B cell (primary cell): ENCODE measurements at regions of chr9 and their contacts with region 1.

Region 1: DNA sequence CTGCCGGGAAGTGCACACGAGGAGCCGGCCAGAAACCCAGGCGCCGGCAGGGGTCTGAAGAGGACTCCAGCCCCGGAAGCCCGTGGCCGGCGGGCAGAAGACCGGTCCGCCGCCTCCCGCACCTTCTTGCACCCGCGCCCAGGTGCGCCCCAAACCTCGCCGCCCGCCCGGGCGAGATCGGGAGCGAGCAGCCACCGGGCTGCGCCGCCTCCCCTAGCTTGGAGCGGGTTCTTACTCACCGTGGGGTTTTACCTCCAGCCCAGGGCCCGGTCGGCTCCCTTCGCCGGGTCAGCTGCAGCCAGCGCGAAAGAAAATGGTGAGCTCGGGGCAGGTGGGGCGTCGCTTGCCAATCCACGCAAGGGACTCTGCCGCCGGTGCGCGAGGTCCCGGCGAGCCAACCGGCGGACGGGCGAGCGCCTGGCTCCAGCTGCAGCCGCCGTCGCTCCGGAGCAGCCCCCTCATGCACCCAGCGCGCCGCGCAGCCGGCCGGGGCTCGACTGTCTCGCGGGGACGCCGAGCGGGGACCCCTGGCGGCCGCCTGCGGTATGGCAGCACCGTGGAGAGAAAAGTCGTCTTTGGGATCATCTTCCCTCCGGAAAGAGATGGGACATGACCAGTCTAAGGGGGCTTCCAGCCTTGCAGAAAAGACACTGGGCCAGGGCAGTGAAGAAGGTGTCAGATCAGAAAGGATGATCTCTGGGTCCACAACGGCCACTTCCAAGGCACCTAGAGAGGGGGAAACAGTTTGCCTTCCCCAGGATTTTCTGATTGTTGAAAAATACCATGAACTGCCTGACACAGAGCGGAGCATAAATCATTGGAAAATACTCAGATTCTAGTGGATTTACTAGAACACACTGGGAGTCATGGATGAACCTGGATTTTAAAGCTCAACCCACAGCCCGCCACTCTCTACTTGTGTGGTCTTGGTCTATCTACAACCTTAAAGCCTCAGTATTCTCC is at the start of gene MOB3B:
- DNase-seq: peak; percentile 89
- ATAC-seq: peak; percentile 83
- H3K4me3 ChIP-seq: peak within 1 kb of the TSS; percentile 71 to 93 (median 82)
- H3K4me3 Mint-ChIP-seq: peak within 1 kb of the TSS; percentile 100
- H3K27ac ChIP-seq: peak within 1 kb of the TSS; percentile 88 to 97
- H3K27ac Mint-ChIP-seq: peak within 1 kb of the TSS; percentile 99
- H3K4me1 ChIP-seq: peaks cover 28 to 30% of the 10 kb centered on the region in 2 donors
- H3K4me1 Mint-ChIP-seq: peaks cover 49% of the 10 kb centered on the region
- H3K27me3 ChIP-seq: no peaks in the 10 kb centered on the region
- H3K27me3 Mint-ChIP-seq: no peaks in the 10 kb centered on the region
- CTCF ChIP-seq: peak; percentile 97
- total RNA-seq, gene MOB3B: 7.3 and 7.6 TPM in 2 replicates

Region 2: DNA sequence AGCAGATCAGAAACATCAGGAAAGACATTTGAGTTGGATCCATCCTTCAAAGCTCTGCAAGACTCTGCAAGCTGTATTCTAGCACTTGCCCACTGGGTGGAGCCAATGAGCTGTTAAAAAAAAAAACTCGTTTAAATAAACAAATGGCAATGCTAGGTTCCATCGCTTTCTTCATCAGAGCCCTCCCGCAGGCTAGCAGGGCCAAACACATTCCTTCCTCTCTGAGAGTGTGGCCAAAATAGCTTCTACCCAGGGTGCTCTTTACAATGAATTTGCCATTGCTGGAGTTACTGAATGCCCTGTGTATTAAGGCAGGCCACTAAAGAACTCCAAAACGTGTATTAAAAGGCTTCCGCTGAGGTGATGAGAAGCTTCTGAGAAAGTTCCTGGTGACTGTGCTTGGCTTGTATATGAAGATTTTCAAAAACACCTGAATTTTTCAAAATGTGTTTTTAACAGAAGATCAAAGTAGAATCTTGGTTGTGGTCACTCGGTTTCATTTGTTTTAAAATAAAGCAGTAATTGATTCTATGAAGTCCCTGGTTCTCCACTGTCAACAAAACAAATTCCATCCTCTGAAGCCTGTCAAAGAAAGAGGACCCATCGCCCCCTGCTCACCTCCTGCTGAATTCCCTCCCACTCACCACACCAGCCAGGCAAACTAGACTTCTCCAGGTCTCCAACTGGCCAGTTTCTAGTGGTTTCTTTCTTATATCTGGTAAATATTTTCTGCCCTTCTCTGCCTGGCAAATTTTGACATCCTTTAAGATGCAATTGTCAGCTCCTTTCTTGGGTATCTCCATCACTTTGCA is 196.2 kb before region 1 on chr9:
- CTCF ChIA-PET with region 1: interaction called, 395 read pairs
- POLR2A ChIA-PET with region 1: interaction called, 12 read pairs
- intact Hi-C with region 1: loop called (anchors 1 kb)
- DNase-seq: peak; percentile 84
- ATAC-seq: peak; percentile 96
- H3K4me3 ChIP-seq: no peak overlapping the region
- H3K4me3 Mint-ChIP-seq: no peak overlapping the region
- H3K27ac ChIP-seq: no peak overlapping the region
- H3K27ac Mint-ChIP-seq: no peak overlapping the region
- H3K4me1 ChIP-seq: peaks cover 6 to 12% of the 10 kb centered on the region in 2 donors
- H3K4me1 Mint-ChIP-seq: peaks cover 10% of the 10 kb centered on the region
- H3K27me3 ChIP-seq: no peaks in the 10 kb centered on the region
- H3K27me3 Mint-ChIP-seq: no peaks in the 10 kb centered on the region
- CTCF ChIP-seq: peak; percentile 91

Region 3: DNA sequence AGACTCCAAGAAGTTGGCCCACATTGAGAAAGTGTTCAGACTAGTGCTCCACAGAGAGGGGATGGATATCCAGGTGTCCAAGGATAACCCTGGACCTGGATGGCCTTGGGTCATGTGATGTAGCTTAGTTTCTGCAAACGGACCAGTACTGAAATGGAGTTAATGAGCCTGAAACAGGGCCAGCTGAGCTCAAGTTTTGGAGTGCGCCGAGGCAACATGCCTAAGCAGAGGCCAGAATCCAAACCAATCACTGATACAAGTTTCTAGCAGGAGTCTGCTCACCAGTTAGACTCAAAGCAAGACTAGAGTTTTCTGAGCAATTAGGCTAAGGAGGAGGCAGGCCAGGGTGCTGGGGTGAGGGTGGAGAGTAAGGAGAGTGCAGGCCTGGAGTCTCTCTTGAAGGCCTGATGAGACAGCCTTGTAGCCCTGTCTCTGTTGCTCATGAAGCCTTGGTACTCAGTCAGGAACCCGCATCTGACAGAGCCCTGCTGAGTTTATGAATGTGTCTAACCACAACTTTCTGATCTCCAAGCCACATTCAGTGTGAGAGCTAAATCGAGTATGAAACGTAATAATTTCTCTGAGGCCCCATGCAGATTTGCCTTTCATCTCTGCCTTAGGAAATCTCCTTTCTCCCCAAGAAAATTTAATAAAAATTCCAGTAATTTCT is 163.8 kb before region 1 on chr9:
- CTCF ChIA-PET with region 1: interaction called, 22 read pairs
- POLR2A ChIA-PET with region 1: interaction called, 4 read pairs
- intact Hi-C with region 1: no loop called
- DNase-seq: no peak
- ATAC-seq: peak; percentile 28
- H3K4me3 ChIP-seq: peak overlapping the region in 1 of 5 experiments; percentile 1
- H3K4me3 Mint-ChIP-seq: peak overlapping the region; percentile 81
- H3K27ac ChIP-seq: no peak overlapping the region
- H3K27ac Mint-ChIP-seq: peak overlapping the region; percentile 28
- H3K4me1 ChIP-seq: peaks cover 56 to 60% of the 10 kb centered on the region in 2 donors
- H3K4me1 Mint-ChIP-seq: peaks cover 56% of the 10 kb centered on the region
- H3K27me3 ChIP-seq: no peaks in the 10 kb centered on the region
- H3K27me3 Mint-ChIP-seq: no peaks in the 10 kb centered on the region
- CTCF ChIP-seq: no peak

Region 4: GRCh38 chr9:27377147-27377807 is 152.3 kb before region 1 on chr9:
- CTCF ChIA-PET with region 1: interaction called, 21 read pairs
- POLR2A ChIA-PET with region 1: no interaction called
- intact Hi-C with region 1: loop called (anchors 2 kb)
- DNase-seq: no peak
- ATAC-seq: no peak
- H3K4me3 ChIP-seq: peak overlapping the region in 4 of 5 experiments; percentile 8 to 51 (median 28)
- H3K4me3 Mint-ChIP-seq: peak overlapping the region; percentile 74
- H3K27ac ChIP-seq: peak overlapping the region; percentile 81 to 85
- H3K27ac Mint-ChIP-seq: peak overlapping the region; percentile 85
- H3K4me1 ChIP-seq: peaks cover 64 to 72% of the 10 kb centered on the region in 2 donors
- H3K4me1 Mint-ChIP-seq: peaks cover 68% of the 10 kb centered on the region
- H3K27me3 ChIP-seq: no peaks in the 10 kb centered on the region
- H3K27me3 Mint-ChIP-seq: no peaks in the 10 kb centered on the region
- CTCF ChIP-seq: no peak

Region 5: DNA sequence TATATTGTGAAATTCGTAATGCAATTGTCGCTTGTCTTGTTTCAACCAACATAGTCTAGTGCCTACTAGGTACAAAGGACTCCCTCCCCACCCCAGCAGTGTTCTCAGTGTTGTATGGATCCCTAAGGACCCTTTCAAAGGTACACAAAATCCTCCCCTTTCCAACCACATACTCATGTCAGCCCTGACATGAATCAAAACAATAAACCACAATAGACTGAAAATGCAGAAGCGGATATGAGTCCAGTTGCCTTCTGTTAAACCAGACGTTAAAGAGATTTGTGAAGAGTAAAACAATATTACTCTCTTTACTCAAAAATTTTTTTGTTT is 87.9 kb before region 1 on chr9:
- CTCF ChIA-PET with region 1: interaction called, 11 read pairs
- POLR2A ChIA-PET with region 1: no interaction called
- intact Hi-C with region 1: loop called (anchors 1 kb)
- DNase-seq: peak; percentile 51
- ATAC-seq: peak; percentile 95
- H3K4me3 ChIP-seq: peak overlapping the region in 1 of 5 experiments; percentile 21
- H3K4me3 Mint-ChIP-seq: peak overlapping the region; percentile 70
- H3K27ac ChIP-seq: peak overlapping the region; percentile 15 to 42
- H3K27ac Mint-ChIP-seq: peak overlapping the region; percentile 87
- H3K4me1 ChIP-seq: peaks cover 50 to 53% of the 10 kb centered on the region in 2 donors
- H3K4me1 Mint-ChIP-seq: peaks cover 70% of the 10 kb centered on the region
- H3K27me3 ChIP-seq: no peaks in the 10 kb centered on the region
- H3K27me3 Mint-ChIP-seq: no peaks in the 10 kb centered on the region
- CTCF ChIP-seq: no peak

Region 6: DNA sequence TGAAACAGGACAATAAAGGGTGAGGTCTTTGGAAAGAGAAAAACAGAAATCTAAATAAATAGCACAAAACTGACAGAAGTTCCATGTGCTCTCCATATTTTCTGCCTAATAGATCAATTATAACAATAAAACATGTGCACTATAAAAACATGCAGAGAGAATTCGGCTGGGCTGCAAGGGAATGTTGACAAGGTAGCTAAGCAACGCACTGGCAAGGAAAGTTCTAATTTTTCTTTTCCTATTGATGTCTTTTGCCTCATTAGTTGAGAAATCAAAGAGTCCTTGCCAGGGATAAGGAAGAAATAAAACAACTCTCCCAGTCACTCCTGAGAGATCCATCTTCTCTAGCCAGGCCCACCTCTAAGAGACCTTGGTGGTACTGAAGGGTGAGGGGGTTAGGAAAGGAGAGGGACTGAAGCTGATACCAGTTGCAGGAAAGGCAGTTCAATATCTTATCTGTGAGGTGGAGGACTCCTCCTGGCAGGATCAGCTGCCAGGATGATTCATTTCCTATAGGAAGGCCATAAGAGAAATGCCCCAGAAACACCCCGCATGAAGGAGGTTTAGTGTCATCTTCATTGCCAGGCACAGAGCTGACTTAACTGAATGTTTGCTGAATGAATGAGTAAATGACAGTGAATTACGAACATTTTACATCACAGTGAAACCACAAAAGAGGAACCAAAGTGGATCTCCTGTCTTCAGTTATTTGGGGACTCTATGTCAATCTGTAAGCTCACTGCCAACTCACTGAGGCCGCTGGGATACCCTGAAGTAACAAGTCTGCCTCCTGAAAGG is 69.2 kb before region 1 on chr9:
- CTCF ChIA-PET with region 1: interaction called, 18 read pairs
- POLR2A ChIA-PET with region 1: no interaction called
- intact Hi-C with region 1: loop called (anchors 1 kb)
- DNase-seq: peak; percentile 84
- ATAC-seq: peak; percentile 93
- H3K4me3 ChIP-seq: no peak overlapping the region
- H3K4me3 Mint-ChIP-seq: peak overlapping the region; percentile 65
- H3K27ac ChIP-seq: peak overlapping the region in 1 of 2 donors; percentile 15
- H3K27ac Mint-ChIP-seq: peak overlapping the region; percentile 80
- H3K4me1 ChIP-seq: peaks cover 31 to 41% of the 10 kb centered on the region in 2 donors
- H3K4me1 Mint-ChIP-seq: peaks cover 55% of the 10 kb centered on the region
- H3K27me3 ChIP-seq: no peaks in the 10 kb centered on the region
- H3K27me3 Mint-ChIP-seq: no peaks in the 10 kb centered on the region
- CTCF ChIP-seq: no peak

Region 7: DNA sequence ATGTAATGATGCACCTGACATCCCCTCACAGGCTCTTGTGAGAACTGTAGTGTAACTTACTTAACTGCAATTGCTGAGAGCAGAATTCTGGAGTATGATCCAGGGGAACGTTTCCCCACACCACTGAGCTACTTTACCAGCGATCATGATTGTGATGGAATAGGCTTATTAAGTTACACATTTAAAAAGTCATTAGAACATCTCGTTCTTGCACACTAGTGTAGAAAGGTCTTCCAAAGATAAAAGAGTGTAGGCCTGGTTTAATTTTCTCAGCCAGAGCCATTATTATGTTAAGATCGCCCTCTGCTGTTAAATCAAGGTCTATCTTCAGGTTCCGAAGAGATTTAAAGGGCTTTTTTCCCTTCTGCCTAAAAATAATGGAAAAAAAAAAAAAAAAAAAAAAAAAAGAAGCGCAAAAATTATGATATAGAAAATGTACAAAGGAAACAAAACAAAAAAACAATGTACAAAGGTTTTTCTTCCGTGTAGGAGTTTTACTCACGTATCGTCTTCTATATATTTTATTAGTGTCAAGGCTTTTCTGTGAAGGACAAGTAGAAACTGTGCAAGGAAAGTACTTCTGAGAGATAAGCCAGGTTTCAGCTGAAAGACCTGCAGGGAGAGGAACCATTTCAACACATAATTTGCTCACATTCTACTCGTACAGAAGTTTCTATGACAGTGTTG is 18.6 kb after region 1 on chr9:
- CTCF ChIA-PET with region 1: interaction called, 43 read pairs
- POLR2A ChIA-PET with region 1: no interaction called
- intact Hi-C with region 1: loop called (anchors 1 kb)
- DNase-seq: peak; percentile 59
- ATAC-seq: peak; percentile 33
- H3K4me3 ChIP-seq: no peak overlapping the region
- H3K4me3 Mint-ChIP-seq: no peak overlapping the region
- H3K27ac ChIP-seq: no peak overlapping the region
- H3K27ac Mint-ChIP-seq: no peak overlapping the region
- H3K4me1 ChIP-seq: no peaks in the 10 kb centered on the region
- H3K4me1 Mint-ChIP-seq: no peaks in the 10 kb centered on the region
- H3K27me3 ChIP-seq: no peaks in the 10 kb centered on the region
- H3K27me3 Mint-ChIP-seq: no peaks in the 10 kb centered on the region
- CTCF ChIP-seq: peak; percentile 68

Region 8: DNA sequence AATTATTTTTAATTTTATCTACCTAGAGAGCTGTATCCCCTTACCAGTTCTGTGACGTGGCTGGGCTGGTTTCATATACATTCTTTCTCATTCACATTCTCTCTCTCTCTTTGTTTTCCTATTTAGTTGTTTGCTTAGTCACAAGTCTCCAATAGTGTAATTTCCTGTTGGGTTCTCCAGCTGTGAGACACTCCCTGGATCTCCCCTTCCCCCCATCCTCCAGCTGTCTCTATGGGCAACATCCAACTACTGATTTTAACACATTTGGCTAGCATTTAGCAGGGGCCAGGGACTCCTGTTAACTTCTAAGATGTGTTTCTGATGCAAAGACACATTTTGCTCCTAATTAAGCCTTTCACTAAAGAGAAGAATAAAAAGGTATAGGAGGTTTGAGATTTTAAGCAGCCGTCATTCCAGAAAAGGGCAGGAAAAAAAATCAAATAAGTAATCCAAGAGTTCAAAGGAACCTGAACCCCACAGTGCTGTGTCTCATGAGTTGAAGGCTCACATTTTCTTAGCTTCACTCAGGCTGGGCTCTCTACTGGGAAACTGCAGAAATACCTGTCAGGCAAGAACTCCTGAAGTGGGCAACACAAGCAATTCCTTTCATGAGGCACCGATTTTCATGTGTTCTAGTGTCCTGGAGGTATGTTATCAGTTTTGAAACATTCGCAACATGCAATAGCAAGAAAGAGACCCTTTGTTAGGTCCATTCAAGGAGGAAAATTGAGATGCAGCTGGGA is 242.4 kb after region 1 on chr9:
- CTCF ChIA-PET with region 1: no interaction called
- POLR2A ChIA-PET with region 1: no interaction called
- intact Hi-C with region 1: no loop called
- DNase-seq: no peak
- ATAC-seq: no peak
- H3K4me3 ChIP-seq: no peak overlapping the region
- H3K4me3 Mint-ChIP-seq: no peak overlapping the region
- H3K27ac ChIP-seq: no peak overlapping the region
- H3K27ac Mint-ChIP-seq: no peak overlapping the region
- H3K4me1 ChIP-seq: no peaks in the 10 kb centered on the region
- H3K4me1 Mint-ChIP-seq: no peaks in the 10 kb centered on the region
- H3K27me3 ChIP-seq: no peaks in the 10 kb centered on the region
- H3K27me3 Mint-ChIP-seq: no peaks in the 10 kb centered on the region
- CTCF ChIP-seq: no peak